ENCODE measurements at regions of chr5 and their contacts with region 1.

Region 1: DNA sequence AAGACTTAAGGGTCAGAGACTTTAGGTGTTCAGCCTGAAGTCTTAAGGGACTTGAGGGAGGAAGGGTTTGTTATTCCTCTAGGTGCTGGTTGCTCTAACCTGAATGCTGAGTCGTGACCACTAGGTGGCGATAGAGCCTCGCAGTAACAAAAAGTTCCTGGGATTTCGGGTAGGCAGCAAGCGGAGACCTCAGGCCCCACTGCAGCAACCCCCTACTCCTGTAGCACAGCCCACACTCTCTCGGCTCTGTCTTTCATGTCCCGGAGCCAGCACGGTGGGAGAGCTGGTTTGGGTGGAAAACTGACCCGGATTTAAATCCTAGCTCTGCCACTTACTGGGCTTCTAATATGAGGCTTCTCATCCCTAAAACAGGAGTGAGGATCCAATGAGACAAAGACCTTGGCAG is 100.3 kb upstream of the PANK3 start:
- DNase-seq: peak; percentile 82
- H3K4me3 ChIP-seq: no peak overlapping the region
- H3K27ac ChIP-seq: peak overlapping the region in 1 of 2 experiments; percentile 44; a peak in 2 of 4 replicates
- H3K4me1 ChIP-seq: peaks cover 0 to 18% of the 10 kb centered on the region in 2 experiments; a peak in 1 of 4 replicates
- H3K27me3 ChIP-seq: no peaks in the 10 kb centered on the region
- CTCF ChIP-seq: peak; percentile 92
- EP300 ChIP-seq: no peak
- RAD21 ChIP-seq: peak; percentile 78

Region 2: DNA sequence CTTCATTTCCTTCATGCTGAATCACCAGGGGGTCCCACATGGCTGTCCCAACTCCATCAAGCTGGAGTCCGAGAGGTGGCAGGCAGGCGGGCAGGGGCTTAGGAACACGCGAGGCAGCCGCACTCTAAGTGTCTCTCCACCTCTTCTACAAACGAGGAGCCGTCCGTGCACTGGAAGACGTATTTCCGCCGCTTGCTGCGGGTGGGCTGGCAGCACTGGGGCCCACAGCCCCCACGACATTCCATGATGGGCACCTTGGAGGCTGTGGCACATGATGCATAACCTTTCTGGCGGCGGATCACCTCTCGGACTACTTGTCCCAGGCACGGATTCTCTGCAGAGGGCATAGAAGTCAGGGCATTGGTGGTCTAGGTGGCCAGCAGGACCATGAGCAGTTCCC is 13.2 kb before region 1 on chr5:
- CTCF ChIA-PET with region 1: interaction called, 12 read pairs
- POLR2A ChIA-PET with region 1: no interaction called
- DNase-seq: no peak
- H3K4me3 ChIP-seq: no peak overlapping the region
- H3K27ac ChIP-seq: peak overlapping the region in 1 of 2 experiments; percentile 25; a peak in 1 of 4 replicates
- H3K4me1 ChIP-seq: peaks cover 0 to 22% of the 10 kb centered on the region in 2 experiments; a peak in 2 of 4 replicates
- H3K27me3 ChIP-seq: no peaks in the 10 kb centered on the region
- CTCF ChIP-seq: no peak
- EP300 ChIP-seq: no peak
- RAD21 ChIP-seq: no peak

Region 3: GRCh38 chr5:168691891-168692290 is 12.4 kb after region 1 on chr5:
- CTCF ChIA-PET with region 1: interaction called, 42 read pairs
- POLR2A ChIA-PET with region 1: no interaction called
- DNase-seq: no peak
- H3K4me3 ChIP-seq: no peak overlapping the region
- H3K27ac ChIP-seq: peak overlapping the region in 1 of 2 experiments; percentile 24; a peak in 1 of 4 replicates
- H3K4me1 ChIP-seq: peaks cover 0 to 16% of the 10 kb centered on the region in 2 experiments; a peak in 1 of 4 replicates
- H3K27me3 ChIP-seq: no peaks in the 10 kb centered on the region
- CTCF ChIP-seq: no peak
- EP300 ChIP-seq: no peak
- RAD21 ChIP-seq: no peak